MCF 10A (cell line): ENCODE measurements at regions of chr10 and their contacts with region 1.

Region 1: DNA sequence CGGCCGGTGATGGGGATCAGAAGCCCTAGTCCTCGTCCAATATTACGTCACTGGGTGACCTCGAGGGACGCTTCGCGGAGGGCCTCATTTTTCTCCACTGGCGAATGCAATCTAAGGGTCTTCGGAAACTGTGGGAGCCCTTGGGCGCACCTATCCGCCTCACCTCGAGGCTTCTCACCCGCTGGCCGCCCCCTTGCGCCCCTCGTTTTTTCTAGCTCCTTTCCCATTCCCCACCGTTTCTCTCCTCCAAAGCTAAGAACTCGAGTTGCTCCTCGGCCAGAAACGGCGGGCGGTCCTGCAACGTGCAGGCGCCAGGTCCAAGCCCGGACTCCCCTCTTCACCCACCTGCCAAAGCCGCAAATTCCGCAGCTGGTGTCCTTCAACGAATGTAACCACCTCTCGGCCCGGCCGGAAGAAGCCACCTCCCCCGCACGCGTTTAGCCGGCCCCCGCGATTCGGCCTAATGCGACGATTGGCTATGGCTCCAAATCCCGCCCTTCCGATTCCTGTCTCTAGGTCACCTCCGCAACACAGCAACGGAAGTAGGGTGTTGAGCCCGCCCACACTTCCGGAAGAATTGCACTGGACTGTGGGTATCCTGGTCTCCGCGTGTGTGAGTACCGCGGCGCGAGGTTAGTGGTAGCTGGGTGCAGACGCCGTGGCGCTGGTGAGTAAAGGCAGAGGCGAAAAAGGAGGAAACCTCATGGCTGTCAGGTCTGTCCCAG is at the starts of genes ATP5MK and PDCD11:
- DNase-seq: peak; percentile 99
- H3K4me3 Mint-ChIP-seq: peak within 1 kb of the TSS; percentile 96
- H3K27ac Mint-ChIP-seq: peak within 1 kb of the TSS; percentile 95
- H3K4me1 Mint-ChIP-seq: peaks cover 24% of the 10 kb centered on the region
- H3K27me3 Mint-ChIP-seq: no peaks in the 10 kb centered on the region
- CTCF ChIP-seq: no peak
- total RNA-seq, gene ATP5MK: 429 and 559 TPM in 2 replicates
- total RNA-seq, gene PDCD11: 73.2 and 81.7 TPM in 2 replicates

Region 2: GRCh38 chr10:103192451-103193106 is 203.6 kb before region 1 on chr10:
- CTCF ChIA-PET with region 1: no interaction called
- POLR2A ChIA-PET with region 1: interaction called, 10 read pairs
- intact Hi-C with region 1: no loop called
- DNase-seq: peak; percentile 76
- H3K4me3 Mint-ChIP-seq: peak overlapping the region; percentile 98
- H3K27ac Mint-ChIP-seq: peak overlapping the region; percentile 94
- H3K4me1 Mint-ChIP-seq: peaks cover 38% of the 10 kb centered on the region
- H3K27me3 Mint-ChIP-seq: no peaks in the 10 kb centered on the region
- CTCF ChIP-seq: no peak

Region 3: DNA sequence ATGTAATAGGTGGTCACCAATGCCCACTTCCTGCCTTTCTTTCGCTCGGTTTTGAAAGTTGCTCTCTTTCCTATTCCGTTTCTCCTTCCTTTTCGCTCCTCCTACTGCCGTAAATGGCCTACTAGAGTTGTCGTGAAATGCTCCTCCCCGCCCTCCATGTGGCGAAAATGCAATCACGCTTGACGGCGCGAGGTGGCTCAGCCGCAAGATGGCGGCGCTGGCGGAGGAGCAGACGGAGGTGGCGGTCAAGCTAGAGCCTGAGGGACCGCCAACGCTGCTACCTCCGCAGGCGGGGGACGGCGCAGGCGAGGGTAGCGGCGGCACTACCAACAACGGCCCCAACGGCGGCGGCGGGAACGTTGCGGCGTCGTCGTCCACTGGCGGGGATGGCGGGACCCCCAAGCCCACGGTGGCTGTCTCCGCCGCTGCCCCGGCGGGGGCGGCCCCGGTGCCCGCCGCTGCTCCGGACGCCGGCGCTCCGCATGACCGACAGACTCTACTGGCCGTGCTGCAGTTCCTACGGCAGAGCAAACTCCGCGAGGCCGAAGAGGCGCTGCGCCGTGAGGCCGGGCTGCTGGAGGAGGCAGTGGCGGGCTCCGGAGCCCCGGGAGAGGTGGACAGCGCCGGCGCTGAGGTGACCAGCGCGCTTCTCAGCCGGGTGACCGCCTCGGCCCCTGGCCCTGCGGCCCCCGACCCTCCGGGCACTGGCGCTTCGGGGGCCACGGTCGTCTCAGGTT is 28.3 kb before region 1 on chr10 and contains the start of gene TAF5:
- CTCF ChIA-PET with region 1: interaction called, 5 read pairs
- POLR2A ChIA-PET with region 1: interaction called, 62 read pairs
- intact Hi-C with region 1: loop called (anchors 2 kb)
- DNase-seq: peak; percentile 97
- H3K4me3 Mint-ChIP-seq: peak within 1 kb of the TSS; percentile 85
- H3K27ac Mint-ChIP-seq: peak within 1 kb of the TSS; percentile 93
- H3K4me1 Mint-ChIP-seq: no peaks in the 10 kb centered on the region
- H3K27me3 Mint-ChIP-seq: no peaks in the 10 kb centered on the region
- CTCF ChIP-seq: no peak
- total RNA-seq, gene TAF5: 2.7 and 3.1 TPM in 2 replicates

Region 4: GRCh38 chr10:103382769-103383168 is 13.5 kb before region 1 on chr10:
- CTCF ChIA-PET with region 1: no interaction called
- POLR2A ChIA-PET with region 1: interaction called, 17 read pairs
- intact Hi-C with region 1: no loop called
- DNase-seq: no peak
- H3K4me3 Mint-ChIP-seq: no peak overlapping the region
- H3K27ac Mint-ChIP-seq: no peak overlapping the region
- H3K4me1 Mint-ChIP-seq: no peaks in the 10 kb centered on the region
- H3K27me3 Mint-ChIP-seq: no peaks in the 10 kb centered on the region
- CTCF ChIP-seq: no peak

Region 5: GRCh38 chr10:103481974-103482531 is 85.8 kb after region 1 on chr10:
- CTCF ChIA-PET with region 1: interaction called, 11 read pairs
- POLR2A ChIA-PET with region 1: interaction called, 3 read pairs
- intact Hi-C with region 1: no loop called
- DNase-seq: peak; percentile 78
- H3K4me3 Mint-ChIP-seq: no peak overlapping the region
- H3K27ac Mint-ChIP-seq: no peak overlapping the region
- H3K4me1 Mint-ChIP-seq: peaks cover 9% of the 10 kb centered on the region
- H3K27me3 Mint-ChIP-seq: no peaks in the 10 kb centered on the region
- CTCF ChIP-seq: peak; percentile 46

Region 6: DNA sequence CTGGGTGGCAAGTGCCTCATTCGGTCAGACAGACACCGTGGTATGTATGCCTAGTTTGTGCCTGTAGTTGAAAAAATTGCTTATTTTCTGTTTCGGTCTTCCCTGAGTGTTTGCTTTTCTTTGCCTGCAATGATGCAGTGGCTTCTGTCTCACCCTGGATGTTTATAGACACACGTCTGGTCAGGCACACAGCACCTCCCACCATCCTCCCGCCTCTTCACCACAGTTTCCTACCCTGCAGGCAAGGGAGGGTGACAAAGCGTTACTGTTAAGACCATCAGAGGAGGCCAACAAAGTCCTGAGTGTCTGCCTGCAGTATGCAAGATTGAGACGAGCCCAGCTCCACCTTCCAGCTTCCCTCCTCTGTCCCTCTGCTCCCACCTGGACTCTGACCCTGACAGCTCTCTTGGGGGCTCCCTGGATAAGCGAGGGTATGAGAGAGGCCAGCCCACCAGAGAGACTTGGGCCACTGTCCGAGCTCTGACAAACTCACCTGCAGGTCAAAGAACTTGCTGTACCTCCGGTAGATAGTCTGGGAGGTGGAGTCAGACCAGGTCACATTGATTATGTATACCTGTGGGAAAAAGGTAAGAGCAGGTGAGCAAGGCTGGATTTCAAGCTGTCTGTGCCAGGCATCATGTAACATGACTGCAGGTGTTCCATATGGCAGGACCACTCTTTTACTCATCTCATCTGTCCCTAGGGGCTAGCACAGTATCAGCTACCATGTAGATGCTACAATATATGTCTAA is 404.7 kb after region 1 on chr10:
- CTCF ChIA-PET with region 1: no interaction called
- POLR2A ChIA-PET with region 1: no interaction called
- intact Hi-C with region 1: no loop called
- DNase-seq: peak; percentile 46
- H3K4me3 Mint-ChIP-seq: no peak overlapping the region
- H3K27ac Mint-ChIP-seq: no peak overlapping the region
- H3K4me1 Mint-ChIP-seq: peaks cover 8% of the 10 kb centered on the region
- H3K27me3 Mint-ChIP-seq: no peaks in the 10 kb centered on the region
- CTCF ChIP-seq: no peak